HAP-1 (cell line): ENCODE measurements at regions of chr4 and their contacts with region 1.

Region 1: DNA sequence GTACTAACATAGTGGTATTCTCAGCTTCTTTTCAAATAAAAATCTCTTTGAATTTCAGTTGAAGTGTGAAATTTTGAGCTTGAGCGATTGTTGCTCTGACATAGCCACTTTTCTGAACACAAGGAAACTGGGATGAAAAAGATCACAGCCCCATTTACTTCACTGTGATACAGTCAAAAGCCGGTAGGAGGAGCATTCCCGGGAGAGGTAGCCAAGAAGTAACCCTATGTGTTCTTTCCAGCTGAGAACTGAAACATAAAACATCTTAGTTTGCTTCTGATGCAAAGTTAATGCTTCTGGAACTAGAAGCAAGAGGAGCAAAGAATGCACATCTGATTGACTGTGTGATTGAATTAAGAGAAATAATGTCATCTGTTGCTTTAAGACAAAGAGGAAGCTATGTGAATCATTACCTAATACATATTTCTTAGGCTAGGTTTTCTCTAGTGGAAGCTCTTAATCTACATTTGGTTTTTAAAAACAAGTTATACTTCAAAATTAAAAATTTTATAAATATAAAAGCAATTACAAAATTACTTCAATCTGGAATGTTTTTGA is 88.3 kb upstream of the UNC5C start:
- DNase-seq: peak in 1 of 2 experiments; percentile 57
- H3K4me3 ChIP-seq: no peak overlapping the region
- H3K4me1 ChIP-seq: peaks cover 36% of the 10 kb centered on the region
- H3K27me3 ChIP-seq: no peaks in the 10 kb centered on the region

Region 2: GRCh38 chr4:95165926-95166524 is 471.1 kb before region 1 on chr4:
- in situ Hi-C with region 1: loop called (anchors 25 kb)
- DNase-seq: peak; percentile 57 to 76
- H3K4me3 ChIP-seq: no peak overlapping the region
- H3K4me1 ChIP-seq: no peaks in the 10 kb centered on the region
- H3K27me3 ChIP-seq: no peaks in the 10 kb centered on the region

Region 3: DNA sequence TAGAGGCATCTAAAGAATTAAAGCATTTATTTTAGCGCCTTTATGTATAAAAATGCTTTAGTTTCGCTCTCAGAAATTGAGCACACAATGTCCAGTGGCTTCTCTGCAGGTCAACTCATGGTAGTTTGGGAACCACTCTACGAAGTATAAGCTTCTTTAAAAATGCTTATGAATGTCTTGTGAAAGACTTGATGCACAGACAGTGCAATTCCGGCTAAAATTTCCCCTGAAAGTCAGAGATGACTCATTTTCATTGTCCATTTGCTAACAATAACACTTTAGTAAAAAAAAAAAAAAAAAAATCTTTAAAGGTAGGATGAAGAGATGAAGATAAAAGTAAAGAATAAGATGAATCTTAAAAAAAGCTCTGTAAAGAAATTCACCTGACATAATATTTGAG is 319.9 kb after region 1 on chr4:
- in situ Hi-C with region 1: no loop called
- DNase-seq: no peak
- H3K4me3 ChIP-seq: no peak overlapping the region
- H3K4me1 ChIP-seq: no peaks in the 10 kb centered on the region; the same call in 1 of the 2 replicates
- H3K27me3 ChIP-seq: no peaks in the 10 kb centered on the region